ENCODE measurements at regions of chr1 and their contacts with region 1.

Region 1: GRCh38 chr1:226940029-226940805 is at the start of gene COQ8A:
- DNase-seq: peak; percentile 96 to 99
- H3K4me3 ChIP-seq: peak within 1 kb of the TSS; percentile 91 to 93
- H3K27ac ChIP-seq: peak within 1 kb of the TSS; percentile 95 to 97
- H3K4me1 ChIP-seq: peaks cover 7 to 21% of the 10 kb centered on the region in 2 donors
- H3K27me3 ChIP-seq: no peaks in the 10 kb centered on the region
- CTCF ChIP-seq: no peak
- total RNA-seq, gene COQ8A: 42.4 TPM

Region 2: DNA sequence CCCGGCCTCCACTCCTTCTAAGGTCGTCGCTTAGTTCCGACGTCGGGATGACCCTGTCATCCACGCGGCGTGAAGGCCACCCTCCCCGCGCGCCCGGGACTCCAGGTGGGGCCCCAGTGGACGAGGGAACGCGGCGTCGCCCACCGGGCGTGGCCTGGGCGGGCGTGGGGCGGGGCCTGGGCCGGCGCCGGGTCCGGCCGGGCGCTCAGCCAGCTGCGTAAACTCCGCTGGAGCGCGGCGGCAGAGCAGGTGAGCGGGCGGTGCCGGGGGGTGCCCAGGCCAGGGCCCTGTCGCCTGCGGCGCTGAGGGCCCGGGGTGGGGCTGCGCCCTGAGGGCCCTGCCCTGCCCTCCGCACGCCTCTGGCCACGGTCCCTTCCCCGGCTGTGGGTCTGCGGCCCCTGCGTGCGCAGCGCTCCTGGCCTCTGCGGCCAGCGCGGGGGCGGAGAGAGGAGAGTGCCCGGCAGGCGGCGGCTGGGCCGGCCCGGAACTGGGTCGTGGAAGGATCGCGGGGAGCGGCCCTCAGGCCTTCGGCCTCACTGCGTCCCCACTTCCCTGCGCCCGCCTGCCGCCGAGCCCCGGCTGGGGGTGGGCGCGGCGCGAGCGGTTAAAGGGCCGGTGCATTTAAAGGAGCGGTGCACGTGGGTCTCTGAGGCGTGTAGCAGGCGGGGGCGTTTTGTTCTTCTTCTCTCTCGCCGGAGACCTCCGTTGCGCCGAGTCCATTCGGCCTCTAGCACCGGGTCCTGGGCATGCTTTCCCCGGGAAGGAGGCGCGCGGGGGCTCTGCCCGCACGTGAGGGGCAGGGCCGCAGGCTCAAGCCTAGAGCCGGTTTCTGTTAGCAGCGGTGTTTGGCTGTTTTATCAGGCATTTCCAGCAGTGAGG is 69.6 kb before region 1 on chr1 and contains the start of gene PSEN2:
- intact Hi-C with region 1: loop called (anchors 1 kb)
- DNase-seq: peak; percentile 24 to 86
- H3K4me3 ChIP-seq: peak within 1 kb of the TSS; percentile 60 to 90
- H3K27ac ChIP-seq: peak within 1 kb of the TSS; percentile 61 to 79
- H3K4me1 ChIP-seq: peaks cover 0 to 9% of the 10 kb centered on the region in 2 donors
- H3K27me3 ChIP-seq: no peaks in the 10 kb centered on the region
- CTCF ChIP-seq: peak; percentile 5 to 35 (median 16)
- total RNA-seq, gene PSEN2: 26.5 TPM

Region 3: GRCh38 chr1:226973898-226974543 is 33.8 kb after region 1 on chr1:
- intact Hi-C with region 1: loop called (anchors 1 kb)
- DNase-seq: peak in 1 of 2 donors; percentile 83
- H3K4me3 ChIP-seq: peak overlapping the region; percentile 1 to 24
- H3K27ac ChIP-seq: peak overlapping the region; percentile 90 to 91
- H3K4me1 ChIP-seq: peaks cover 0 to 27% of the 10 kb centered on the region in 2 donors
- H3K27me3 ChIP-seq: no peaks in the 10 kb centered on the region
- CTCF ChIP-seq: no peak

Measured in ascending aorta (tissue), 2 donors.